Sigmoid colon (tissue), 7 donors: ENCODE measurements at regions of chr3 and their contacts with region 1.

Region 1: GRCh38 chr3:107522510-107523288 is at the start of gene BBX:
- DNase-seq: peak; percentile 96
- H3K4me3 ChIP-seq: peak within 1 kb of the TSS; percentile 62 to 98 (median 92)
- H3K27ac ChIP-seq: peak within 1 kb of the TSS; percentile 85 to 98 (median 94)
- H3K4me1 ChIP-seq: peaks cover 0 to 19% (median 9%) of the 10 kb centered on the region in 4 donors
- H3K27me3 ChIP-seq: no peaks in the 10 kb centered on the region
- CTCF ChIP-seq: no peak
- EP300 ChIP-seq: no peak
- POLR2A ChIP-seq: peak; percentile 71 to 72
- total RNA-seq, gene BBX: 71.1 to 93.3 (median 82.8) TPM

Region 2: GRCh38 chr3:106317141-106318055 is 1205.3 kb before region 1 on chr3:
- intact Hi-C with region 1: no loop called
- DNase-seq: no peak
- H3K4me3 ChIP-seq: no peak overlapping the region
- H3K27ac ChIP-seq: no peak overlapping the region
- H3K4me1 ChIP-seq: no peaks in the 10 kb centered on the region
- H3K27me3 ChIP-seq: no peaks in the 10 kb centered on the region
- CTCF ChIP-seq: no peak
- EP300 ChIP-seq: no peak
- POLR2A ChIP-seq: no peak

Region 3: GRCh38 chr3:107235928-107236315 is 286.8 kb before region 1 on chr3:
- intact Hi-C with region 1: loop called (anchors 1 kb)
- DNase-seq: peak; percentile 64
- H3K4me3 ChIP-seq: peak overlapping the region; percentile 28 to 53 (median 50)
- H3K27ac ChIP-seq: peak overlapping the region; percentile 66 to 74 (median 68)
- H3K4me1 ChIP-seq: peaks cover 0 to 22% (median 8%) of the 10 kb centered on the region in 4 donors
- H3K27me3 ChIP-seq: no peaks in the 10 kb centered on the region
- CTCF ChIP-seq: peak; percentile 79 to 91 (median 83)
- EP300 ChIP-seq: no peak
- POLR2A ChIP-seq: no peak

Region 4: DNA sequence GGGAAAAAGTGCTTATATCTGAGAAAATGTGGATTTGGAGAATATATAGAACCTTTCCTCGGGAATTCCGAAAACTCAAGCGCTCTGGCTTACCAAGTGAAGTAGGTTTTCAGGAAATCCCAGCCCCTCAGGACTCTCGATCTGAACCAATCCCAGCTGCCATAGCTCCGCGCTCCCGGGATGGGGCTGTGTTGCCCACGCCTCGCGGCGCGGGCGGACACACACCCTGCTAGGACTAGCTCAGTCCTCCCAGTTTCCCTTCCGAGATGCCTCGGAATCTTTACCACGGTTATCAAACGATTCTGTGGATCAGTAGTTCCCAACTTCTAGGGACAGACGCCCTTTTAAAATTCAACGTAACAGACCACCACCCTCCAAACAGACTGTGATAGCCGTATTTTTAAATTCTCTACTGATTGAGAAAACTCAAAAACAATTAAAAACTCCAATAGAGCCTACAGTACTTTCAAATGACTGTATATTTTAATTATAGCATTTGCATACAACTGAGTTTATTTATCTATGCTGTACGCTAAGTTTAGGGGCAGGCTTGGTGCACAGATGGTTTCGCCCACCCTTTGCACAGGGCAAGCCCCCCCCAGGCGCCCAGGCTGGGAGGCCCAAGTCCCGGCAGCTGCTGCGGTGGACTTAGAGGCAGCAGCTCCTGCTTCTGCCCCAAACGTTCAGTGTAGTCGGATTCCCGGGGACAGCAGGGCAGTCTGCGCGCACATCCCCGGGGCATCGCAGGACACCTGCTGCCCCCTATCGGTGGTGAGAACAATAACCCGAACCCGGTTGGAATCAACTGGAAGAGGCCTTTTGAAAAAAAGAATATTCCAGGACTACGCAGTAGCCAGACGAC is 93.1 kb before region 1 on chr3:
- intact Hi-C with region 1: loop called (anchors 1 kb)
- DNase-seq: peak; percentile 92
- H3K4me3 ChIP-seq: peak overlapping the region; percentile 73 to 92 (median 81)
- H3K27ac ChIP-seq: peak overlapping the region; percentile 94 to 98 (median 97)
- H3K4me1 ChIP-seq: peaks cover 0 to 11% (median 7%) of the 10 kb centered on the region in 4 donors
- H3K27me3 ChIP-seq: no peaks in the 10 kb centered on the region
- CTCF ChIP-seq: peak; percentile 56 to 92 (median 80)
- EP300 ChIP-seq: no peak
- POLR2A ChIP-seq: no peak

Region 5: DNA sequence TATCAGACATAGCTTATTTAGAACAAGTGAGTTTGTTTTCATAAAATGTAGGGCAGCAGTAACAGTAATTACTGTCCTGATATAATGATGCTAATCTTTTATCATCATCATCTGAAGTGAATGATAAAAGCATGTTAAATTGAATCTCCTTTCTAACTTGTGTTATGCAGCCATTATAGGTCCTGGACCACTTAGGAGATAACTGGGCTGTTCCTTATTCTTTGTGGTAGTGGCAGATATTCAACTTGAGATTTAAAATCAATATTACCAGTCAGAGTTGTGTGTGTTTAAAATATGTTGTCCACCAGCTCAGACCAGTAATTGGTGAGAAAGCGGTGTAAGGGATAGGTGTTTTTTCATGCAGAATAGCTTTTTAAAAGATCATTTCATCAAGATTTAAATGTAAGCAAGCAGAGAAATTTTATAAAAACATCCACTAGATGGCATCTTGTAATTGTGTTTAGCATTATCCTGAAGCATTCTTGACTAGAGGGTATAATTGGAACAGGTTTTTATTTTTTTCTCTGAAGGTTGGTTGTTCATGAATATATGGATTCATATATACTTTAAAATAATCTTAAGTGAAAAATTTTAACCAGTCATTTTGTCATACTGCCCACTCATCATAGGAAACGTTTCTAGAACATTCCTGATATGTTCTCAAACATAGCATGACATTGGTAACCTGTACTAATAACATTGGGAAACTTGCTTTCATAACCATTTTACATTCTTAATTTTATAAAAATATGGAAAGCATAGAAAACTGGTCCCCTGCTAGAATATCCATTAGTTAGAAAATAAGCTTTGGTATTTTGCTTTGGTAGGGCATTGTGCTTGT is 154.0 kb after region 1 on chr3:
- intact Hi-C with region 1: loop called (anchors 5 kb)
- DNase-seq: no peak
- H3K4me3 ChIP-seq: no peak overlapping the region
- H3K27ac ChIP-seq: no peak overlapping the region
- H3K4me1 ChIP-seq: peaks cover 0 to 56% (median 36%) of the 10 kb centered on the region in 4 donors
- H3K27me3 ChIP-seq: no peaks in the 10 kb centered on the region
- CTCF ChIP-seq: peak in 3 of 4 experiments; percentile 28 to 54 (median 47)
- EP300 ChIP-seq: no peak
- POLR2A ChIP-seq: no peak

Region 6: GRCh38 chr3:107690522-107691138 is 167.9 kb after region 1 on chr3:
- intact Hi-C with region 1: no loop called
- DNase-seq: no peak
- H3K4me3 ChIP-seq: no peak overlapping the region
- H3K27ac ChIP-seq: no peak overlapping the region
- H3K4me1 ChIP-seq: peaks cover 0 to 4% (median 0%) of the 10 kb centered on the region in 4 donors
- H3K27me3 ChIP-seq: no peaks in the 10 kb centered on the region
- CTCF ChIP-seq: peak; percentile 7 to 49 (median 17)
- EP300 ChIP-seq: no peak
- POLR2A ChIP-seq: no peak

Region 7: GRCh38 chr3:108100906-108101660 is 578.4 kb after region 1 on chr3:
- intact Hi-C with region 1: no loop called
- DNase-seq: no peak
- H3K4me3 ChIP-seq: no peak overlapping the region
- H3K27ac ChIP-seq: no peak overlapping the region
- H3K4me1 ChIP-seq: peaks cover 0 to 18% (median 5%) of the 10 kb centered on the region in 4 donors
- H3K27me3 ChIP-seq: no peaks in the 10 kb centered on the region
- CTCF ChIP-seq: no peak
- EP300 ChIP-seq: no peak
- POLR2A ChIP-seq: no peak